ENCODE measurements at regions of chr17 and their contacts with region 1.

Region 1: DNA sequence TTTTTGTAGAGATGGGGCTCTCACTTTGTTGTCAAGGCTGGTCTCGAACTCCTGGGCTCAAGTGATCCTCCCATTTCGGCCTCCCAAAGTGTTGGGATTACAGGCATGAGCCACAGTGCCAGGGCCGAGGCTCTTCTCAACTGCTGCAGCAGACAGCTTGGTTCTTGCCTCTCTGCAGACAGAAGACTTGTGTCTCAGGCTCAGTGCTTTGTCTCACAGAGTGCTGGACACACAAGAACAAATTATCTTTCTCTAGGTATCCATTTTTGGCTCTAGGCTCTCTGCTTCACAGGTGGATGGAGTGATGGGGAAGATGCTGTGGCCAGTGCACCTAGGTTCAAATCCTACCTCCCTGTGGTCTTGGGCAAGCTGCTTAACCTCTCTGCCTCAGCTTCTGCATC is 80.8 kb upstream of the RNU2-1 start:
- DNase-seq: no peak
- H3K4me3 ChIP-seq: no peak overlapping the region
- H3K27me3 ChIP-seq: no peaks in the 10 kb centered on the region
- CTCF ChIP-seq: no peak

Region 2: DNA sequence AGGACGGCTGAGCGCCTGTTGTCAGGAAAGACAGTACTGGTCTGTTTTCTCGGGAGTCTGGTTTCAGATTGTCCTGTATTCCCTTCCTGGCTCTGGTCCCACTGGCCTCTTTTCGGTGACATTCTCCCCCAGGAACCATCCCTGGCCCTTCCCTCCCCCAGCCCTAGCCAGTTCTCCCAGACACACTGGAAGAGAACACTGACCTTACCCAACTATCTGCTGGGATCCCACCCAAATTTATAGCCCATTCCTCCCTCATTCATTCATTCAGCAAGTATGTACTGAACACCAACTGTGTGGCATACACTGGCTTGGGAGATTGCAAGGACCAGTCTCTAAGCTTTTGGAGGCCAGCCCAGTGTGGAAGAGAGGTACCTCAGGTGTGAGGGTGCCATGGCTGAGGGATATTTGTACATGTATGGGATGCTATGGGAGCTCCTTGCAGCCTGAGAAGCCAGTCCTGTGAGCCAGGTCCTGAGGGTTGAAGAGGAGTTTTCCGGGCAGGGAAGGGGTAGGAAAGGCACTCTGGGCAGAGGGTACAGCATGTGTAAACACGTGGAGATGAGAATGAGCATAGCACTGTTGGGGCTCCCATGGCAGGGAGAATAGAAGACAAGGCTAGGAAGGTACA is 284.4 kb before region 1 on chr17:
- CTCF ChIA-PET with region 1: no interaction called
- POLR2A ChIA-PET with region 1: interaction called, 10 read pairs
- DNase-seq: no peak
- H3K4me3 ChIP-seq: no peak overlapping the region
- H3K27me3 ChIP-seq: no peaks in the 10 kb centered on the region
- CTCF ChIP-seq: no peak

Region 3: GRCh38 chr17:43338886-43339516 is 24.4 kb after region 1 on chr17:
- CTCF ChIA-PET with region 1: interaction called, 20 read pairs
- POLR2A ChIA-PET with region 1: interaction called, 3 read pairs
- DNase-seq: no peak
- H3K4me3 ChIP-seq: no peak overlapping the region
- H3K27me3 ChIP-seq: no peaks in the 10 kb centered on the region
- CTCF ChIP-seq: peak; percentile 84

Region 4: GRCh38 chr17:43360739-43361505 is 46.3 kb after region 1 on chr17:
- CTCF ChIA-PET with region 1: no interaction called
- POLR2A ChIA-PET with region 1: interaction called, 10 read pairs
- DNase-seq: peak; percentile 89
- H3K4me3 ChIP-seq: peak overlapping the region; percentile 51
- H3K27me3 ChIP-seq: no peaks in the 10 kb centered on the region
- CTCF ChIP-seq: no peak

Region 5: GRCh38 chr17:43367737-43368242 is 53.2 kb after region 1 on chr17:
- CTCF ChIA-PET with region 1: no interaction called
- POLR2A ChIA-PET with region 1: interaction called, 24 read pairs
- DNase-seq: peak; percentile 51
- H3K4me3 ChIP-seq: peak overlapping the region; percentile 38
- H3K27me3 ChIP-seq: no peaks in the 10 kb centered on the region
- CTCF ChIP-seq: no peak

Measured in BJ (cell line).